ENCODE measurements at regions of chr3 and their contacts with region 1.

Region 1: GRCh38 chr3:59940718-59941117 is 890.9 kb upstream of the CFAP20DC start:
- DNase-seq: no peak
- ATAC-seq: no peak
- H3K4me3 ChIP-seq: no peak overlapping the region
- H3K4me3 Mint-ChIP-seq: peak overlapping the region; percentile 8
- H3K27ac ChIP-seq: no peak overlapping the region
- H3K27ac Mint-ChIP-seq: peak overlapping the region; percentile 89
- H3K4me1 ChIP-seq: peaks cover 21% of the 10 kb centered on the region
- H3K4me1 Mint-ChIP-seq: peaks cover 81% of the 10 kb centered on the region
- H3K27me3 ChIP-seq: no peaks in the 10 kb centered on the region
- H3K27me3 Mint-ChIP-seq: no peaks in the 10 kb centered on the region
- CTCF ChIP-seq: no peak

Region 2: DNA sequence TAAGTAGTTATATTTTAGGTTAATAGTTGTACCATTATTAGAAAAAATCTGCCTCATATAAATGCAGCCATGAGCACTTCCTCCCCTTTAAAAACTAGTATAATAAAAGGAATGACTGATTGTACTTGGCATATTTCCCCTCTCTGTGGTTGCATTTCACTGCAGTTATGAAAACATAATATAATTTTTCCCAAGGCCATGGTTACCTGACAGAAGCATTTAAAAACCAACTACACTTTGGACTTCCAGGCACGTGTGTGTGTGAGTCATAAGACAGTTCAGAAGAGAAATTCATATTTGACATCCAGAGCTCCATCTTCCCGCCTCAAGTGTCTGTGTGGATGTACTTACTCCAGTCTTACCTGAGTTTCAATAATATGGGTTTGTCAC is 62.7 kb before region 1 on chr3:
- CTCF ChIA-PET with region 1: no interaction called
- POLR2A ChIA-PET with region 1: no interaction called
- intact Hi-C with region 1: no loop called
- DNase-seq: no peak
- ATAC-seq: no peak
- H3K4me3 ChIP-seq: no peak overlapping the region
- H3K4me3 Mint-ChIP-seq: no peak overlapping the region
- H3K27ac ChIP-seq: no peak overlapping the region
- H3K27ac Mint-ChIP-seq: no peak overlapping the region
- H3K4me1 ChIP-seq: no peaks in the 10 kb centered on the region
- H3K4me1 Mint-ChIP-seq: peaks cover 69% of the 10 kb centered on the region
- H3K27me3 ChIP-seq: no peaks in the 10 kb centered on the region
- H3K27me3 Mint-ChIP-seq: no peaks in the 10 kb centered on the region
- CTCF ChIP-seq: no peak

Region 3: DNA sequence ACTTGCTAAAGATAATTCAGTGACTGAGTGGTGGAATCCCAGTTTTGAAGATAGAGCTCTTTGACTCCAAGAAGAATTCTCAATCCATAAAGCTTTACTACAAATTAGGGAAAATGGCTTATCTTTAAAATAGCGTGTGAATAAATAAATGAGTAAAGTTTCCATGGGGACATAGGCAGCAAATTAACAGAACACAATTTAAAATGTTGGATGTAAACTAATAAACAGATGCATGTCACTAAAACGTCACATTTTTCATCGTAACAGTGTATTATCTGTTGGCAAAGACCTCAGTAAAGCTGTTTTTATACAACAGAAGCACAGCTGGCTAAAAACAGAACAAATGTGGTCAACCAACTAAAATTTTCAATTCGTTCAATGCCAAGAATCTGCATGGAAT is 23.0 kb after region 1 on chr3:
- CTCF ChIA-PET with region 1: no interaction called
- POLR2A ChIA-PET with region 1: no interaction called
- intact Hi-C with region 1: loop called in 1 of 2 experiments (anchors 2 kb)
- DNase-seq: no peak
- ATAC-seq: no peak
- H3K4me3 ChIP-seq: no peak overlapping the region
- H3K4me3 Mint-ChIP-seq: no peak overlapping the region
- H3K27ac ChIP-seq: no peak overlapping the region
- H3K27ac Mint-ChIP-seq: no peak overlapping the region
- H3K4me1 ChIP-seq: no peaks in the 10 kb centered on the region
- H3K4me1 Mint-ChIP-seq: peaks cover 41% of the 10 kb centered on the region
- H3K27me3 ChIP-seq: no peaks in the 10 kb centered on the region
- H3K27me3 Mint-ChIP-seq: no peaks in the 10 kb centered on the region
- CTCF ChIP-seq: no peak

Region 4: DNA sequence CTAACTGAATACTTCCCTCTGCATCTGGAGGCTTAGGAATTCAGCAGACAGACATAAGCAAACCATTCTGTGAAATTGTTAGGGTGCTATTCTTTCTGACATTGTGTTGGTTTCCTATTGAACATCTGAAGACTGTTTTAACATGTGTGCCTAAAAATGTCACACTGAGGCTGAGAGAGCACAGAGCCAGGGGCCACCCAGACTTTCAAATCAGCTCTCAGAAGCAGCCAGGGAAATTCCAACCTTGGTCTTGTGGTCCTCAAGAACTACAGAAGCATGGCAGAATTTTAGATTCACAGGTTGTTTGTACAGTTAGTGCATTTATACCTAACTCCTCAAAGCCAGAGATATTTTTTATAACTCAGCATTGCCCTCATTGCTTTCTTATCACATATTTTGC is 38.3 kb after region 1 on chr3:
- CTCF ChIA-PET with region 1: no interaction called
- POLR2A ChIA-PET with region 1: no interaction called
- intact Hi-C with region 1: loop called in 1 of 2 experiments (anchors 5 kb)
- DNase-seq: peak in 3 of 14 experiments; percentile 11 to 70 (median 65)
- ATAC-seq: peak; percentile 37
- H3K4me3 ChIP-seq: no peak overlapping the region
- H3K4me3 Mint-ChIP-seq: peak overlapping the region; percentile 20
- H3K27ac ChIP-seq: no peak overlapping the region
- H3K27ac Mint-ChIP-seq: peak overlapping the region; percentile 69
- H3K4me1 ChIP-seq: peaks cover 16% of the 10 kb centered on the region
- H3K4me1 Mint-ChIP-seq: peaks cover 78% of the 10 kb centered on the region
- H3K27me3 ChIP-seq: no peaks in the 10 kb centered on the region
- H3K27me3 Mint-ChIP-seq: no peaks in the 10 kb centered on the region
- CTCF ChIP-seq: no peak

Region 5: GRCh38 chr3:60169755-60170154 is 229.0 kb after region 1 on chr3:
- CTCF ChIA-PET with region 1: no interaction called
- POLR2A ChIA-PET with region 1: no interaction called
- intact Hi-C with region 1: no loop called
- DNase-seq: no peak
- ATAC-seq: no peak
- H3K4me3 ChIP-seq: no peak overlapping the region
- H3K4me3 Mint-ChIP-seq: no peak overlapping the region
- H3K27ac ChIP-seq: no peak overlapping the region
- H3K27ac Mint-ChIP-seq: no peak overlapping the region
- H3K4me1 ChIP-seq: no peaks in the 10 kb centered on the region
- H3K4me1 Mint-ChIP-seq: peaks cover 5% of the 10 kb centered on the region
- H3K27me3 ChIP-seq: no peaks in the 10 kb centered on the region
- H3K27me3 Mint-ChIP-seq: no peaks in the 10 kb centered on the region
- CTCF ChIP-seq: no peak

Region 6: DNA sequence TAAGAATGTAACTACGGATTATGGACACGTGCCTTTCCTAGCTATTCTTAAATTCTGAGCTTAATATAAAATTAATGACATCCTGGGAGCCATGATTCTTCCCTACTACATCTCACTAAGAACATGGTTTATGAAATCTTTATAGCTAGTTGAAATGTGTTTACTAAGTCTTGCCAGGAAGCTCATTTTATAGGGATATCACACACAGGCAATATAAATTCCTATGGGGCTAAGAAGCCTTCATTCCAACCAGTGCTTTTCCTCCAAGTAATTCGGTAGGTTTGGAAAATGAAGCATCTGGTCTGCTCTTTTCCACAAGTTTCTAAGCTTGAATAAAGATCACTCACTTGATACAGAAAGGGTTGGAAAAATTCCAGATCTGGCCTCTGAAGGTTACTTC is 508.0 kb after region 1 on chr3:
- CTCF ChIA-PET with region 1: no interaction called
- POLR2A ChIA-PET with region 1: no interaction called
- intact Hi-C with region 1: no loop called
- DNase-seq: no peak
- ATAC-seq: no peak
- H3K4me3 ChIP-seq: no peak overlapping the region
- H3K4me3 Mint-ChIP-seq: no peak overlapping the region
- H3K27ac ChIP-seq: no peak overlapping the region
- H3K27ac Mint-ChIP-seq: no peak overlapping the region
- H3K4me1 ChIP-seq: no peaks in the 10 kb centered on the region
- H3K4me1 Mint-ChIP-seq: no peaks in the 10 kb centered on the region
- H3K27me3 ChIP-seq: no peaks in the 10 kb centered on the region
- H3K27me3 Mint-ChIP-seq: no peaks in the 10 kb centered on the region
- CTCF ChIP-seq: no peak

Region 7: DNA sequence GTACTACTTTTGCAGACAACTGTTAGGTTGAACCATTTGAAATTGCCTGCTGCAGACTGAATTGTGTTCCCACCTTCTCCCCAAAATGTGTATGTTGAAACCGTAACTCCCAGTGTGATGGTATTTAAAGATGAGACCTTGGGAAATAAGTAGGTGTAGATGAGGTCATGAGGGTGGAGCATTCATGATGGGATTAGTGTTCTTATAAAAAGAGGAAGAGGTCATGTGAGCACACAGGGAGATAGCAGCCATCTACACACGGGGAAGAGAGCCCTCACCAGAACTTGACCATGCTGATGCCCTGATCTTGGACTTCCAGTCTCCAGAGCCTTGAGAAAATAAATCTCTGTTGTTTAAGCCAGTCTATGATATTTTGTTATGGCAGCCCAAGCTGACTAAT is 1327.9 kb after region 1 on chr3:
- CTCF ChIA-PET with region 1: no interaction called
- POLR2A ChIA-PET with region 1: no interaction called
- intact Hi-C with region 1: no loop called
- DNase-seq: no peak
- ATAC-seq: no peak
- H3K4me3 ChIP-seq: no peak overlapping the region
- H3K4me3 Mint-ChIP-seq: no peak overlapping the region
- H3K27ac ChIP-seq: no peak overlapping the region
- H3K27ac Mint-ChIP-seq: no peak overlapping the region
- H3K4me1 ChIP-seq: no peaks in the 10 kb centered on the region
- H3K4me1 Mint-ChIP-seq: no peaks in the 10 kb centered on the region
- H3K27me3 ChIP-seq: no peaks in the 10 kb centered on the region
- H3K27me3 Mint-ChIP-seq: peaks cover 7% of the 10 kb centered on the region
- CTCF ChIP-seq: no peak